ENCODE measurements at regions of chr5 and their contacts with region 1.

Region 1: GRCh38 chr5:43389679-43390329 is 22.4 kb downstream of the CCL28 start:
- DNase-seq: peak; percentile 71 to 94
- H3K4me3 ChIP-seq: no peak overlapping the region
- H3K4me1 ChIP-seq: peaks cover 3% of the 10 kb centered on the region
- H3K27me3 ChIP-seq: no peaks in the 10 kb centered on the region

Region 2: GRCh38 chr5:43227655-43228054 is 162.1 kb before region 1 on chr5:
- in situ Hi-C with region 1: loop called (anchors 10 kb)
- DNase-seq: peak; percentile 16
- H3K4me3 ChIP-seq: no peak overlapping the region
- H3K4me1 ChIP-seq: no peaks in the 10 kb centered on the region
- H3K27me3 ChIP-seq: no peaks in the 10 kb centered on the region; the same call in 1 of the 2 replicates

Measured in HAP-1 (cell line).